ENCODE measurements at regions of chr17 and their contacts with region 1.

Region 1: DNA sequence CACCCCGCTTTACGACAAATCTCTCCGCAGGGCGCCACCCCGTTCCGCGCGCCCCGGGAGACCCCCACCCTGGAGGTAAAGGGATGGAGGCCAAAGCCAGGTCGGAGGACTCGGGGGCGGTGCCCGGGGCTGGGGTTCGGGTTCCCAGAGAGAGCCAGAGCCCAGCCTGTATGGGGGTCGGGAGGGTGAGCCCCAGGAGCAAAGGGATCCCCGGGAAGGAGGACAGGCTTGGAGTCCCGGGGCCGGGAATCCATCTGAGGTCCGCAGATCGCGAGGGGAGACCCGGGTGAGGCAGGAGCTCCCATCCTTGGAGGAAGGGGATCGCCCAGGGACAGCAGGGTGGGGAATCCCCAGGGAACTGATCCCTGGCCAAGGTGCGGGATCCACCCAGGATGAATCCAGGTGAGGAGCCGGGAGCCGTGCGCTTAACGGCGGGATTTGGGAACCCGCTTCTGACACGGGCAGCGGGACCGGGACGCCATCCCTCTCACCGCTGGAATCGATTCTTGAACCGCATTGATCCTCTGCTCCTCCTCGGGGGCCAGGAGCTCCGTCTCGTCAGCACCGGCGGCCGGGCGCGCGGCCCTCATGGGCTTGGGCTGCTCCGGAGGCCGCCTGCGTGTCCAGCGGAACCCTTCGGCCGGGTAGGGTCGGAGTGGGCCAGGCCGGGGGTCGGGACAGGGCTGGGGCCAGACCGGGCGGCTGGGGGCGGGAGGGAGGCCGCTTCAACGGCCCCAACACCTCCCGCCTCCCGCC is at the start of gene MMD:
- DNase-seq: no peak
- H3K4me3 Mint-ChIP-seq: peak within 1 kb of the TSS; percentile 92
- H3K27ac Mint-ChIP-seq: peak within 1 kb of the TSS; percentile 95
- H3K4me1 Mint-ChIP-seq: peaks cover 47% of the 10 kb centered on the region
- H3K27me3 Mint-ChIP-seq: peaks cover 28% of the 10 kb centered on the region
- total RNA-seq, gene MMD: 21.7 and 23.4 TPM in 2 replicates

Region 2: GRCh38 chr17:54968262-54968987 is 452.9 kb before region 1 on chr17 and contains the starts of genes COX11 and STXBP4:
- intact Hi-C with region 1: loop called (anchors 1 kb)
- DNase-seq: peak; percentile 99
- H3K4me3 Mint-ChIP-seq: no peak within 1 kb of the TSS
- H3K27ac Mint-ChIP-seq: no peak within 1 kb of the TSS
- H3K4me1 Mint-ChIP-seq: peaks cover 22% of the 10 kb centered on the region
- H3K27me3 Mint-ChIP-seq: no peaks in the 10 kb centered on the region
- total RNA-seq, gene COX11: 46.1 and 48.2 TPM in 2 replicates
- total RNA-seq, gene STXBP4: 8.2 and 9.2 TPM in 2 replicates

Region 3: GRCh38 chr17:55348749-55349354 is 72.5 kb before region 1 on chr17:
- intact Hi-C with region 1: loop called (anchors 5 kb)
- DNase-seq: peak; percentile 83
- H3K4me3 Mint-ChIP-seq: no peak overlapping the region
- H3K27ac Mint-ChIP-seq: no peak overlapping the region
- H3K4me1 Mint-ChIP-seq: peaks cover 42% of the 10 kb centered on the region
- H3K27me3 Mint-ChIP-seq: peaks cover 2% of the 10 kb centered on the region

Region 4: DNA sequence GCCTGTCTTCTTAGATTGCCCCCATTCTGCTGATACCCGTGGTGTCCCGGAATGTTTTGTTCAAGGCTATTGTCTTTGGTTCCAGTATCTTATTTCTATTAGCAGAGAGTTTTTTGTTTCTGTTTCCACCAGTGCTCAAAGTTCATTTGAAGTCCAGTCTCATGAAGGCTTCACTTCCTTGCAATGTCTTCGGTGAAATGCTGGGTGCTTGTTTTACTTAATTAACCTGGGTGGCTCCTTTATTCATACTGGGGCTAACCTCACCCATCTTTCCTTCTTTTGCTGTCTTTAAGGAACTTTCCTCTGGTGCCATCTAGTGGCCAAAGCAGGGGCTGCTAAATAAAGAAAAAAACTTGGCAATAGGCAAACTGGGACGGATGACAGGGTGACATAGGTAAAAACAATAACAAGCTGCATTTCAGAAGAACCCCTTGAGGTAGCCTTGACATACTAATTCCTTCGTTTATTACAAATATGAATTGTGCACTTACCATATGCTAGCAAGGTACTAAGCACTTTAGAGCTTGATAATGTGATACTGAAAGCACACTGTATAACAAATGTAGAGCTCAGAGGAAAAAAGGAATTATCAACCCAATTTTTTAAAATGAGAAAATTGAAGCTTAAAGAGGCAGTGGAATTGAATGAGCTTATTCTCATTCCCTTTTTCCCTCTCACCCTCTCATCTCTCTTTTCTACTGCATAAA is 92.7 kb after region 1 on chr17:
- intact Hi-C with region 1: loop called (anchors 5 kb)
- DNase-seq: peak; percentile 92
- H3K4me3 Mint-ChIP-seq: no peak overlapping the region
- H3K27ac Mint-ChIP-seq: no peak overlapping the region
- H3K4me1 Mint-ChIP-seq: peaks cover 3% of the 10 kb centered on the region
- H3K27me3 Mint-ChIP-seq: peaks cover 8% of the 10 kb centered on the region

Region 5: DNA sequence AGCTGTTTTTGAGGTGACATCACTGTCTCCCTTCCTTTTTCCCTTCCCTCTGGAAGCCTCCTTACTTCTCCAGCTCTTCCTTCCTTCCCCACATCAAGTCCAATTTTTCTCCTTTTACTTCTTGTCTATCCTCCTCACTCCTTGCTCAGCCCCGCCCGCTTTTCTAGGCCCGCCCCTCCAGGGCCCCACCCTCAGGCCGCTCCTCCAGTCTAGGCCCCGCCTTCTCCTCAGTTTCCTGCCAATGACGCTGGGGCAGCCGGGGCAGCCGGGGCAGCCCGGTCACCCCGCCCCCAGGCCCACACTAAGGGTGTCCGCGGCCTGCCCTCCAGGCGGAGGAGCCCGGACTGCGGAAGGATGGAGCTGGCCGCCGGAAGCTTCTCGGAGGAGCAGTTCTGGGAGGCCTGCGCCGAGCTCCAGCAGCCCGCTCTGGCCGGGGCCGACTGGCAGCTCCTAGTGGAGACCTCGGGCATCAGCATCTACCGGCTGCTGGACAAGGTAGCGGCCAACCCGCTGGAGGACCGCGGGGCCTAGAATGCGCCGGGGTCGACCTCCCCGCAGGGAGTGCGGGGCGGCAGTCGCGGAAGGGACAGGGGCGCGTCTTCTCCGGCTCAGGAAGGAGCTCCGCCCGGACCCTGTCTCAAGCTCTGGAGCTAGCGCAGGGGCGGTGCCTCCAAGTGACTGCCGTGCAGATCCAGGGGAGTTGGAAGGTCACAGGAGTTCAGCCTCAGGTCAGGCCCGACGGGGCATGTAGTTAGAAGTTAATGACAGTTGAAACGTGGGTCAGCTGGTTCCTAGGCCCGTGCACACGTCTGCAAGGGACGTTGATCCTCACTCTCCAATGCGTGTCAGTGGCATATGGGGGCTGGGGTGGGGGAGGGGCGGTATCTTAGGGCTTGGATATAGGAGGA is 329.6 kb after region 1 on chr17 and contains the start of gene PCTP:
- intact Hi-C with region 1: loop called (anchors 2 kb)
- DNase-seq: peak; percentile 97
- H3K4me3 Mint-ChIP-seq: peak within 1 kb of the TSS; percentile 80
- H3K27ac Mint-ChIP-seq: peak within 1 kb of the TSS; percentile 20
- H3K4me1 Mint-ChIP-seq: peaks cover 10% of the 10 kb centered on the region
- H3K27me3 Mint-ChIP-seq: peaks cover 24% of the 10 kb centered on the region
- total RNA-seq, gene PCTP: 5.4 and 6.4 TPM in 2 replicates

Measured in activated CD4-positive, alpha-beta T cell treated with anti-CD3 and anti-CD28 coated beads, Interleukin-2, amount 10 ng/mL, durations not matched to agents 24 days and 14 days (primary cell).